ENCODE measurements at regions of chr14 and their contacts with region 1.

Region 1: GRCh38 chr14:74493343-74494261 is at the start of gene ISCA2:
- DNase-seq: peak; percentile 96 to 100 (median 98)

Region 2: DNA sequence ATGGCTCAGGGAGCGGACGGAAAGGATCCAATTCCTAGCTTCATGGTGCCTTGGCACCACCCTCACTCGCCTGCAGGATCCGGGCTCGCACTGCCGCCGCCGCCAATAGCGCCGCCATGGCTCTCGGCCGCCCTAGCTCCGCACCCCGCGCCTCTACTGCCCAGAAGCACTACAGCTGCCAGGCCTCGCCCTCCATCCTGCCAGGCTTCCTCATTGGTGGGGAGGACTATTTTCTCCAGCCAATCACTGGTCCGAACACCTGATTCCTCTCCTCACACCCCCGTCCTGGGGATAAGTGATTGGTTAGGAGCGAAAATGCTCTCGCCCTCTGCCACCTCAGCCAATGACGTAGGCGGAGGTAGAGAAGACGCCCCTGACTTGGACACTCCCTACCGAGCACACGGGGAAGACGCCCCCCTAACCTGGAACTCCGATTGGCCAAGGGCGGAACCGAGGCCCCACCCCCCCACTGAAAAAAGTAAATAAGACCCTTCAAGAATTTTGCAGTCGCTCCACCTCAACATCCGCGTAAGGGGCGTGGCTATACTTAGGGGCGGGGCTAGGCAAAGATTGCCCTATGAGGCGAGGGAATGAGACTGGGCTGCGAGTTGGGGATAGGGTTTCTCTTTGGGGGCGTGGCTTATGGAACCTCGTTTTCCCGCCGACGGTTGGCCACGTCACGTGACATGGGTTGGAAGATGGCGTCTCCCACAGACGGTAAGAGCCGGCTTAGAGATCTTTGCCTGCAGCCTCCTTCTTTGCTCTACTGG is 409.1 kb before region 1 on chr14 and contains the starts of genes ALDH6A1 and LIN52:
- intact Hi-C with region 1: loop called (anchors 10 kb)
- DNase-seq: peak; percentile 95 to 100 (median 98)

Region 3: DNA sequence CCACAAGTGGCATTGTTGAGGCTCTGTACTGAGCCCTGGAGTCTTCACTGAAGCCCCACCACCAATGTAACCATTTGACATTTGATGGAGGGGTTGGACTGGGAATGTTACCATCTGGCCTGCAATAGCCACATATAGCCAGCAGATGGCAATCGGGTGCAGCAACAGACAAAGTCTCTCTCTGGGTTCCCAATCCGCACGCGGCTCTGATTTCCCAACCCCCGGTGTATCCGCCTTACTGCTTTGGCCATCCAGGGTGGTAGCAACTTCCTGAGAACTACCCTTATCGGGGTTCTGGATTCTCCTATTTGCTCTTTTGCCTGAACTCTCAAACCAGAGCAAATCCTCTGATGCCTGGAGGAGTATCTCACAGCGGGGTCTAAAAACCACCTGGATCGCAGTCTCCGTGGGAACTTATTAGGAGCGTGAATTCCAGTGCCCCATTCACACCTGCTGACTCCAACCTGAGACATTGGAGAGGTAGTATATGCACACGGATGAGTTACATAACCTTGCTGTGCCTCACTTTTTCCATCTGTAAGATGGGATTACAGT is 131.2 kb before region 1 on chr14:
- intact Hi-C with region 1: loop called (anchors 5 kb)
- DNase-seq: peak; percentile 48 to 96 (median 80)

Measured in posterior cingulate gyrus (tissue), 11 donors.